Sciatic nerve (tissue), 2 donors: ENCODE measurements at regions of chr2 and their contacts with region 1.

Region 1: DNA sequence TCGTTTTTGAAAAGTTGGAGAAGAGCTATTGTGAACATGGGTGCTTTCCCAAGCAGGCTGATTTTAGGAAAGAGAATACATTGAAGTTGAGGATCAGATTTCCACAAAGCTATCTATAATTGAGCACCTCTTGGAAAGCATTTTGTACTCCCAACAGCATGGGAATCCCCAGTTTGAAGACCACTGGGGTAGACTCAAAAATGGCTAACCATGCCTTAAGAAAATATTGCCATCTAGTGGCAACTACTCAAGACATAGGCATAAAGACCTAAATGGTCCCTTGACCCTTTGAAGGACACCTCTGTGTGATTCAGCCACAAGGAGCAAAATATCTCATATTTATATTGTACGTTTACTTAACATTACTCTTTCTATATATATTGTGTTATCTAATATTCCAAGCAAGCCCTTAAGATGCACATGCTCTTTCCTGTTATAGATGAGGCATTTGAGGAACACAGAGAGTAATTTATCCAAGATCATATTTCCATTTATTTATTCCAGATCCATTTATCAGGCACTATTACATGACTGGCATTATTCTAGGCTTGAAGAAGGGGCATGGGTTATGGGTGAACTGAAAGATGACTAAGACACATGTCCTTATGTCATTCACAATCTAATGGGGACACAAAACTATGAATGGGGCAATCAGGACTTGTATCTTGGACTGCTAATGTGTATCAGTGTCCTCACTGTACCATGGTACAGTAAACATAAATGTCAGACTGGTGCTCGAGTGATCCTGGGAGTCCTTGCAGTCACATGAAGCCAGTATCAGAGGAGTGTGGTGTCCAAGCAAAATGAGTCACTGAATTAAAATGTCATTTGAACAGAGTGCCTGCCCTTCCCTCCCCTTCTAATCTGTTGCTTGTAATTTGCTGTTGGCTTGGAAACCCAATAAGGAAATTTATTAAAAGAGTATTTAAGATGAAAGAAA is 121.0 kb upstream of the XPO1 start:
- DNase-seq: no peak
- ATAC-seq: no peak

Region 2: DNA sequence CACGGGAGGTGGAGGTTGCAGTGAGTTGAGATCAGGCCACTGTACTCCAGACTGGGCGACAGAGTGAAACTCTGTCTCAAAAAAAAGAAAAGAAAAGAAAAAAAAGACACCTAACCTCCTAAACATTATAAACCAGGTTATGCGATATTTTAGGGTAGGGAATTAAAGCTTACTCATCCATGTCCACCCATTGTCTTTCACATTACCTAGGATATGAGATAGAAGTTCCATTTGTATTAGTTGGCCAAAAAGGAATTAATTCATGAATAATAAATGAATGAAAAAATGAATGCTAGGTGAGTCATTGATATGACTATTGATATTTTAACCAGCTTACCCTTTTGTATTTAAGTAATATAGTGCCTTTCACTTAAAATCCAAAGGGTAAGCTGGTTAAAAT is 61.8 kb after region 1 on chr2:
- intact Hi-C with region 1: loop called (anchors 2 kb)
- DNase-seq: no peak
- ATAC-seq: no peak

Region 3: GRCh38 chr2:61775956-61776570 is 117.0 kb after region 1 on chr2:
- intact Hi-C with region 1: no loop called
- DNase-seq: no peak
- ATAC-seq: no peak